Activated B cell treated with CpG ODN at 0.5 μM for 24 hours (primary cell): ENCODE measurements at regions of chr18 and their contacts with region 1.

Region 1: GRCh38 chr18:267688-268552 is at the start of gene THOC1:
- DNase-seq: peak; percentile 90
- ATAC-seq: peak; percentile 87
- H3K4me3 Mint-ChIP-seq: peak within 1 kb of the TSS; percentile 99
- H3K27ac Mint-ChIP-seq: peak within 1 kb of the TSS; percentile 99
- H3K4me1 Mint-ChIP-seq: peaks cover 37% of the 10 kb centered on the region
- H3K27me3 Mint-ChIP-seq: no peaks in the 10 kb centered on the region
- CTCF ChIP-seq: no peak
- total RNA-seq, gene THOC1: 53.3 and 68.6 TPM in 2 replicates

Region 2: DNA sequence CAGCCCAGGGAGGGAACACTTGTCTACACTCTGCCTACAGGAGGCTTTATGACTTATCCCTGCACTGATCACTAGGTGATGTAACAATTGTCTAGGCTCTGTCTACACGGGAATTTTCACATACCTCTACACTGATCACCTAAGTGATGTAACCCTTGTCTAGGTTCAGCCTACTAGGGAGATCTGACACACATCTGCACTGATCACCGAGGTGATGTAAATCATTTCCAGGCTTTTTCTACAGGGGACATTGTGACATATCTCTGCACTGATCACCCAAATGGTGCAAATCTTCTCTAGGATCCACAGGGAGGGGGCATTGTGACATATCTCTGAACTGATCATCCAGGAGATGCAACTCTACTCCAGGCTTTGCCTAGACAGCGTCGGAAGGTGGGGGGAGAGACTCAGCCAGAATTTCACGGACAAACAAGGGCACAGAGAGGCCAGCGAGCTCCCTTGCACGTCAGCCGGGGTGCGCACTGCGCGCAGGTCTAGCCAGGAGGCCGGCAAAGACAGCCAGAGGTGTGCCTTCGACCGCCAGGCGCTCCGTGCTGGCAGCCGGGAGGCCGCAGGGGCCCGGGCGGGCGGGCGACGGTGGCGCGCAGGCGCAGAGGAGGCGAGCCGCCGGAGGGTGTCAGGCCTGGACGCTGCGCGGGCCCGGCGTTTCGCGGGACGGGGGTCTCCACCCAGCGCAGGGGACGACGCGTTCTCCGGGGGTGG is 156.5 kb before region 1 on chr18:
- CTCF ChIA-PET with region 1: no interaction called
- POLR2A ChIA-PET with region 1: no interaction called
- intact Hi-C with region 1: loop called (anchors 5 kb)
- DNase-seq: peak; percentile 36
- ATAC-seq: peak; percentile 47
- H3K4me3 Mint-ChIP-seq: peak overlapping the region; percentile 75
- H3K27ac Mint-ChIP-seq: no peak overlapping the region
- H3K4me1 Mint-ChIP-seq: peaks cover 4% of the 10 kb centered on the region
- H3K27me3 Mint-ChIP-seq: peaks cover 9% of the 10 kb centered on the region
- CTCF ChIP-seq: no peak

Region 3: DNA sequence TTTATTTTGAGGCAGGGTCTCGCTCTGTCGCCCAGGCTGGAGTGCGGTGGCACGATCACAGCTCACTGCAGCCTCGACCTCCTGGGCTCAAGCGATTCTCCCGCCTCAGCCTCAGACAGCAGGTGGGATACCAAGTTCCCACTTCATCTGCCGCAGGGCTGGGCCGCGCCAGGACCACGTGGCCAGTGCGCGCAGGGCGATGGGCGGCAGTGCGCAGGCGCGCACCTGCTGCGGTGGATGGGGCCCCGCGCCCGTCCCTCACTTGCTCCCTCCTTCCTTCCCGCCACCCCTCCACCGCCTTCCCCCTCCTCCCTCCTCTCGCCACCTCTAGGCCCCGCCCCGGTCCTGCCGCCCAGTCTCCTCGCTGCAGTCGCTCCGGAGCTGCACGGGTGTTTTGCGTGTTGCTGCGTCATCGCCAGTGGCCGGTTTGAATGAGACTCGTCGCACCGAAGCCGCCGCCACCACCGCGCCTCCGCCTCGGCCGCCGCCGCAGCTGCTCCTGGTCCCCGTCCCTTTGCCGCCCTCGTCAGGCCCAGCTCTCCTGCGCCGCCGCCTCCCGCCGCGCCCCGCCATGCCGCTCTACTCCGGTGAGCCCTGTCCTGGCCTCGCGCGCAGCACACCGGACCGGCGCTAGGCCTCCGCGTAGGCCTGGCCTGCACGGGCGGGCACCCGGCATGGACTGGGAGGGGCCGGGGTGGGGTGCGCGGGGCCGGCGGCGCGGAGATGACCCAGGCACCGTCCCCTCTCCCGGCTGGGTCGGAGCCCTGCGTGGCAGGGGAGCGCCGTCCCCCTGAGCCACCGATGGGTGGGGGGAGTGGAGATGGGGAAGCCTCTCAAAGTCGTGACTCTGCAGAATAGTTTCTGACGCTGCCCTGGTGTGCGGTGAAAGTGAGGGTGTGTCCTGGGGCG is 109.5 kb before region 1 on chr18 and contains the start of gene USP14:
- CTCF ChIA-PET with region 1: interaction called, 3 read pairs
- POLR2A ChIA-PET with region 1: interaction called, 48 read pairs
- intact Hi-C with region 1: loop called (anchors 1 kb)
- DNase-seq: peak; percentile 88
- ATAC-seq: peak; percentile 96
- H3K4me3 Mint-ChIP-seq: peak within 1 kb of the TSS; percentile 93
- H3K27ac Mint-ChIP-seq: peak within 1 kb of the TSS; percentile 87
- H3K4me1 Mint-ChIP-seq: peaks cover 30% of the 10 kb centered on the region
- H3K27me3 Mint-ChIP-seq: peaks cover 2% of the 10 kb centered on the region
- CTCF ChIP-seq: no peak
- total RNA-seq, gene USP14: 53.1 and 53.9 TPM in 2 replicates

Region 4: GRCh38 chr18:217532-218334 is 50.2 kb before region 1 on chr18:
- CTCF ChIA-PET with region 1: no interaction called
- POLR2A ChIA-PET with region 1: no interaction called
- intact Hi-C with region 1: loop called (anchors 2 kb)
- DNase-seq: no peak
- ATAC-seq: no peak
- H3K4me3 Mint-ChIP-seq: no peak overlapping the region
- H3K27ac Mint-ChIP-seq: peak overlapping the region; percentile 50
- H3K4me1 Mint-ChIP-seq: no peaks in the 10 kb centered on the region
- H3K27me3 Mint-ChIP-seq: no peaks in the 10 kb centered on the region
- CTCF ChIP-seq: no peak

Region 5: GRCh38 chr18:240175-240574 is 27.7 kb before region 1 on chr18:
- CTCF ChIA-PET with region 1: no interaction called
- POLR2A ChIA-PET with region 1: no interaction called
- intact Hi-C with region 1: no loop called
- DNase-seq: no peak
- ATAC-seq: no peak
- H3K4me3 Mint-ChIP-seq: no peak overlapping the region
- H3K27ac Mint-ChIP-seq: no peak overlapping the region
- H3K4me1 Mint-ChIP-seq: no peaks in the 10 kb centered on the region
- H3K27me3 Mint-ChIP-seq: no peaks in the 10 kb centered on the region
- CTCF ChIP-seq: no peak

Region 6: GRCh38 chr18:253121-253520 is 14.8 kb before region 1 on chr18:
- CTCF ChIA-PET with region 1: no interaction called
- POLR2A ChIA-PET with region 1: interaction called, 8 read pairs
- intact Hi-C with region 1: loop called (anchors 2 kb)
- DNase-seq: no peak
- ATAC-seq: no peak
- H3K4me3 Mint-ChIP-seq: no peak overlapping the region
- H3K27ac Mint-ChIP-seq: no peak overlapping the region
- H3K4me1 Mint-ChIP-seq: no peaks in the 10 kb centered on the region
- H3K27me3 Mint-ChIP-seq: no peaks in the 10 kb centered on the region
- CTCF ChIP-seq: no peak

Region 7: DNA sequence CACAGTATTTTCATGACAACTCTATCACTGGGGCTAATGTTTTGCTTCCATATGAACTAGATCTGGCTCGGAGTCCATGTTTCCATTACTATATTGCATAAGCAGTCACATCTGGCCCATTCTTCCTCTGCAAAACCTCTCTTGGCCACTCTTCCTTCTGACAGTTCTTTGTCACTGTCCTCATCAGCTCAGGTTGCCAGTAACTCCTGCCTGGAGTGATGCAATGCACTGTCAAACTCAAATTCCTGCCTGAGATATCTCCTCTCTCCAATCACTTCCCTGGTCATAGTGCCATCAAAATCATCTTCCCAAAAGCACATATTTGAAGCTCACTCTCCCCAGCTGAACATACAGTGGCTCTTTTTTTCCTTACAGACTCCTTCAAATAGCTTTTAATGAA is 166.5 kb after region 1 on chr18:
- CTCF ChIA-PET with region 1: no interaction called
- POLR2A ChIA-PET with region 1: no interaction called
- intact Hi-C with region 1: no loop called
- DNase-seq: no peak
- ATAC-seq: no peak
- H3K4me3 Mint-ChIP-seq: no peak overlapping the region
- H3K27ac Mint-ChIP-seq: no peak overlapping the region
- H3K4me1 Mint-ChIP-seq: no peaks in the 10 kb centered on the region
- H3K27me3 Mint-ChIP-seq: peaks cover 4% of the 10 kb centered on the region
- CTCF ChIP-seq: no peak

Region 8: DNA sequence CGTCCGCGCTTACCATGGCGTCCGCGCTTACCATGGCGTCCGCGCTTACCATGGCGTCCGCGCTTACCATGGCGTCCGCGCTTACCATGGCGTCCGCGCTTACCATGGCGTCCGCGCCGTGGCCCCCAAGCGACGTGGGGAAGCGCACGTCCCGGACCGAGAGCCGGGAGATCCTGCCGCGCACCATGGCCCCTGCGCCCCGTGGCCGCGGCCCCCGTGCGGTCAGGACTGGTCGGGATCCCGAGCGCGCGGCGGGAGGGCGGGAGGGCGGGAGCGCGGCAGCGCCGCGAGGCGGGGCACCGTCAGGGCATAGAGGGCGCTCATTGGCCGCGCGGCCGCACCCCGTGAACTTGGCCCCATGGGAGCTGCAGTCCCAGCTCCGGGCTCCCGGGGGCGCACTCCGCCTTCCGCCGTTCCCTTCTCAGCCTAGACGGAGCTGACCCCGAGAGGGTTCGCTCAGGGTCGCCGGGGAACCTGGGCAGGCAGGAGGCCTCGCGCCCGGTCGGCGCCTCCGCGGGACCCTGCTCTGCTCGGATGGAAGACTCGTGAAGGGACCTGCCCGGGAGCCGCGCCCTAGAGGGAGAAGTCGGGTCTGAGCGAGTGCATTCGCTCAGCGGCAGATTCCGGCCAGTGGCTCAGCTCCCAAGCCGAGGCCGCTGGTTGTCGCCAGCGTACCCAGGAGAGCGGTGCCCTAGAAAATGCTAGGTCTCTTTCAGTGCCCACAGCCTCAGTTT is 444.6 kb after region 1 on chr18 and contains the start of gene ENOSF1:
- CTCF ChIA-PET with region 1: interaction called, 3 read pairs
- POLR2A ChIA-PET with region 1: no interaction called
- intact Hi-C with region 1: loop called (anchors 2 kb)
- DNase-seq: peak; percentile 62
- ATAC-seq: peak; percentile 91
- H3K4me3 Mint-ChIP-seq: peak within 1 kb of the TSS; percentile 84
- H3K27ac Mint-ChIP-seq: peak within 1 kb of the TSS; percentile 13
- H3K4me1 Mint-ChIP-seq: peaks cover 7% of the 10 kb centered on the region
- H3K27me3 Mint-ChIP-seq: peaks cover 4% of the 10 kb centered on the region
- CTCF ChIP-seq: no peak
- total RNA-seq, gene ENOSF1: 21.3 and 23.8 TPM in 2 replicates